Natural killer cell (primary cell): ENCODE measurements at regions of chr20 and their contacts with region 1.

Region 1: GRCh38 chr20:56400090-56400542 is 7.7 kb downstream of the CSTF1 start:
- DNase-seq: peak in 1 of 2 donors; percentile 90
- ATAC-seq: peak; percentile 82 to 97 (median 83)
- H3K4me3 ChIP-seq: no peak overlapping the region
- H3K4me3 Mint-ChIP-seq: no peak overlapping the region
- H3K27ac ChIP-seq: no peak overlapping the region
- H3K27ac Mint-ChIP-seq: peak overlapping the region; percentile 80
- H3K4me1 ChIP-seq: no peaks in the 10 kb centered on the region
- H3K4me1 Mint-ChIP-seq: peaks cover 8 to 13% of the 10 kb centered on the region in 2 donors
- H3K27me3 ChIP-seq: no peaks in the 10 kb centered on the region
- H3K27me3 Mint-ChIP-seq: no peaks in the 10 kb centered on the region
- CTCF ChIP-seq: peak; percentile 96

Region 2: GRCh38 chr20:56278196-56278595 is 121.9 kb before region 1 on chr20:
- intact Hi-C with region 1: no loop called
- DNase-seq: no peak
- ATAC-seq: no peak
- H3K4me3 ChIP-seq: no peak overlapping the region
- H3K4me3 Mint-ChIP-seq: no peak overlapping the region
- H3K27ac ChIP-seq: no peak overlapping the region
- H3K27ac Mint-ChIP-seq: no peak overlapping the region
- H3K4me1 ChIP-seq: no peaks in the 10 kb centered on the region
- H3K4me1 Mint-ChIP-seq: no peaks in the 10 kb centered on the region
- H3K27me3 ChIP-seq: no peaks in the 10 kb centered on the region
- H3K27me3 Mint-ChIP-seq: peaks cover 0 to 2% of the 10 kb centered on the region in 2 donors
- CTCF ChIP-seq: no peak

Region 3: GRCh38 chr20:56504373-56505005 is 104.4 kb after region 1 on chr20:
- intact Hi-C with region 1: loop called (anchors 1 kb)
- DNase-seq: peak in 1 of 2 donors; percentile 56
- ATAC-seq: peak; percentile 62 to 77 (median 76)
- H3K4me3 ChIP-seq: no peak overlapping the region
- H3K4me3 Mint-ChIP-seq: no peak overlapping the region
- H3K27ac ChIP-seq: no peak overlapping the region
- H3K27ac Mint-ChIP-seq: peak overlapping the region; percentile 25 to 38
- H3K4me1 ChIP-seq: no peaks in the 10 kb centered on the region
- H3K4me1 Mint-ChIP-seq: peaks cover 31 to 32% of the 10 kb centered on the region in 2 donors
- H3K27me3 ChIP-seq: no peaks in the 10 kb centered on the region
- H3K27me3 Mint-ChIP-seq: no peaks in the 10 kb centered on the region
- CTCF ChIP-seq: peak; percentile 67

Region 4: GRCh38 chr20:56516631-56517030 is 116.5 kb after region 1 on chr20:
- intact Hi-C with region 1: loop called (anchors 1 kb)
- DNase-seq: no peak
- ATAC-seq: no peak
- H3K4me3 ChIP-seq: no peak overlapping the region
- H3K4me3 Mint-ChIP-seq: no peak overlapping the region
- H3K27ac ChIP-seq: no peak overlapping the region
- H3K27ac Mint-ChIP-seq: no peak overlapping the region
- H3K4me1 ChIP-seq: no peaks in the 10 kb centered on the region
- H3K4me1 Mint-ChIP-seq: no peaks in the 10 kb centered on the region
- H3K27me3 ChIP-seq: no peaks in the 10 kb centered on the region
- H3K27me3 Mint-ChIP-seq: no peaks in the 10 kb centered on the region
- CTCF ChIP-seq: no peak